Adrenal gland (tissue), 19 donors: ENCODE measurements at regions of chr11 and their contacts with region 1.

Region 1: GRCh38 chr11:43579171-43579918 is 101.2 kb upstream of the HSD17B12 start:
- DNase-seq: no peak
- H3K4me3 ChIP-seq: peak overlapping the region in 2 of 4 donors; percentile 29 to 49
- H3K27ac ChIP-seq: peak overlapping the region in 1 of 5 donors; percentile 59
- H3K4me1 ChIP-seq: peaks cover 23 to 40% of the 10 kb centered on the region in 2 donors
- H3K27me3 ChIP-seq: peaks cover 93% of the 10 kb centered on the region
- CTCF ChIP-seq: peak in 4 of 6 experiments; percentile 7 to 21 (median 19)
- POLR2A ChIP-seq: no peak

Region 2: DNA sequence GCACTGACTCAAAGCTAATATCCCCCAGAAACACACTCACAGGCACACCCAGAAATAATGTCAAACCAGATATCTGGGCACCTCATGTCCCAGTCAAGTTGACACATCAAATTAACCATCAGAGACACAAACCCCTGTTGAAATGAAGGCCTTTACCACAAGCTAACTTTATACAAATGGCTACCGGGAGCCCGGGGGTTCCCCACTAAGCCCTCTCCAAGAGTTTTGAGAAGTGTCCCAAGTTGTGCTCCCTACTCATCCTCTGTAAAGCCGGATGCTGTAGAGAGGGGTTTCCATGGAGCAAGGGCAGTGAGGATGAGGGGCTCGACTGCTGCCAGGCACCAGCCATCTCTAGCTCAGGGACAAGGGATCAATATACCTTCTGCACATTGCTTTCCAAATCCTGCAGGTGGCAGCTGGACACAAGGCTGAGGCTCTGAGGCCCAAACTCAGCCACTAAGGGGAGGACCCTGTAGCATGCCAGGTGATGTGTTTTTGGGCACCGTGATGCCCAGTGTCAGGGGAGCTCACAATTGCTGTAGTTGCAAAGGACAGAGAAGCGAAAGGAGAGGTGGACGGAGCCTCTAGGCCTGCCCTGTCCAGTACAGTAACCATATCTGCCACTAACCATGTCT is 74.9 kb before region 1 on chr11:
- intact Hi-C with region 1: no loop called
- DNase-seq: peak; percentile 26 to 65 (median 48)
- H3K4me3 ChIP-seq: no peak overlapping the region
- H3K27ac ChIP-seq: no peak overlapping the region
- H3K4me1 ChIP-seq: no peaks in the 10 kb centered on the region
- H3K27me3 ChIP-seq: no peaks in the 10 kb centered on the region
- CTCF ChIP-seq: peak; percentile 16 to 67 (median 54)
- POLR2A ChIP-seq: no peak

Region 3: DNA sequence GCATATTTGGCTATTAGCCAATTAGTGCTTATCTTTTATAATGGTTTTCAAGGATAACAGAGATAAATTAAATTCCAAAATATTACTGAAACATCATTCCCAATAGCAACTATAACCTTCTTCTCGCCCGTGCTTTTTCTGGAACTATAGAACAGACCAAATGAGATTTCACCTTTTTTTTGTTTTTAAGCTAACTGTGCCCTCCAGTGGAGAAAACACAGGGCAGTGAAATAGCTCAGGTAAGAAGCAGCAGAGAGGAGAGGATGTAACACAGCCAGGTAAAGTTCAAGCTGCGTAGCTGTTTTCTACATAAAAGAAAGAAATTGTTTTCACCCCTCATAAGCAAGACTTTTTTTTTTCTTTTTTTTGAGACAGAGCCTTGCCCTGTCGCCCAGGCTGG is 129.4 kb after region 1 on chr11:
- intact Hi-C with region 1: loop called in 1 of 2 experiments (anchors 10 kb)
- DNase-seq: peak in 1 of 7 donors; percentile 3
- H3K4me3 ChIP-seq: no peak overlapping the region
- H3K27ac ChIP-seq: no peak overlapping the region
- H3K4me1 ChIP-seq: no peaks in the 10 kb centered on the region
- H3K27me3 ChIP-seq: no peaks in the 10 kb centered on the region
- CTCF ChIP-seq: peak in 5 of 6 experiments; percentile 14 to 49 (median 40)
- POLR2A ChIP-seq: no peak

Region 4: GRCh38 chr11:43810929-43811596 is 231.7 kb after region 1 on chr11:
- intact Hi-C with region 1: loop called in 1 of 2 experiments (anchors 10 kb)
- DNase-seq: peak in 2 of 7 donors; percentile 13 to 15
- H3K4me3 ChIP-seq: no peak overlapping the region
- H3K27ac ChIP-seq: peak overlapping the region in 1 of 5 donors; percentile 54
- H3K4me1 ChIP-seq: no peaks in the 10 kb centered on the region
- H3K27me3 ChIP-seq: no peaks in the 10 kb centered on the region
- CTCF ChIP-seq: peak; percentile 31 to 63 (median 48)
- POLR2A ChIP-seq: no peak

Region 5: DNA sequence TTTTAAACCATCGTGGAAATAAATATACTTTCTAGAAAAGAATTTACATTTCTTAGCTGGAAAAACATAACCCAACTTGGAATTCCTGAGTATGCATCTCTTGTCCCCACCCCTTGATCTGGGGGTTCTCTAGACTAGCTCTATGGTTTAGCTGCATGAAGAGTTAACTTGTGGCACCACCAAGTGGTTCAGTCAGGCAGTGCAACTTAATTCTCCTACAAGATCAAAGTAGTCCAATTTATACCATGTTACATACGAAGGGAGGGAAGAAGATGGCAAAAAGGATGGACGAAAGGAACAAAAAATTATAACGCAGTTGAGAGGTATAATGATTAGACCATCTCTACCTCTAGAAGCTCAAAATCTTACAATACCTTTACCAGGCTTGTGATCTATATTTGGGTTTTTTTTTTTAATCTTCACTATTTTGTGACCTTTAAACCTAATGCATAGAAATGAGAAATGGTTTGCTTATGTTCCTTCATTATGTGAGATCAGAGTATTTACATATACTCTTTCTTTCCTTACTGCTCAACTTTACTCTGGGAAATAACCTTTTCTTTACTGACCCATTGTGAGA is 272.8 kb after region 1 on chr11:
- intact Hi-C with region 1: loop called in 1 of 2 experiments (anchors 10 kb)
- DNase-seq: peak; percentile 39 to 90 (median 62)
- H3K4me3 ChIP-seq: no peak overlapping the region
- H3K27ac ChIP-seq: no peak overlapping the region
- H3K4me1 ChIP-seq: no peaks in the 10 kb centered on the region
- H3K27me3 ChIP-seq: no peaks in the 10 kb centered on the region
- CTCF ChIP-seq: peak; percentile 54 to 84 (median 78)
- POLR2A ChIP-seq: no peak